ENCODE measurements at regions of chr20 and their contacts with region 1.

Region 1: GRCh38 chr20:53939572-53940359 is 130.6 kb downstream of the BCAS1 start:
- DNase-seq: peak; percentile 54
- H3K4me3 Mint-ChIP-seq: no peak overlapping the region
- H3K27ac Mint-ChIP-seq: no peak overlapping the region
- H3K4me1 Mint-ChIP-seq: peaks cover 69% of the 10 kb centered on the region
- H3K27me3 Mint-ChIP-seq: no peaks in the 10 kb centered on the region

Region 2: GRCh38 chr20:52312132-52312729 is 1627.5 kb before region 1 on chr20:
- intact Hi-C with region 1: loop called (anchors 10 kb)
- DNase-seq: peak; percentile 20
- H3K4me3 Mint-ChIP-seq: no peak overlapping the region
- H3K27ac Mint-ChIP-seq: no peak overlapping the region
- H3K4me1 Mint-ChIP-seq: no peaks in the 10 kb centered on the region
- H3K27me3 Mint-ChIP-seq: no peaks in the 10 kb centered on the region

Region 3: GRCh38 chr20:53157443-53158408 is 782.0 kb before region 1 on chr20:
- intact Hi-C with region 1: loop called (anchors 5 kb)
- DNase-seq: no peak
- H3K4me3 Mint-ChIP-seq: peak overlapping the region; percentile 12
- H3K27ac Mint-ChIP-seq: peak overlapping the region; percentile 50
- H3K4me1 Mint-ChIP-seq: peaks cover 65% of the 10 kb centered on the region
- H3K27me3 Mint-ChIP-seq: no peaks in the 10 kb centered on the region

Region 4: DNA sequence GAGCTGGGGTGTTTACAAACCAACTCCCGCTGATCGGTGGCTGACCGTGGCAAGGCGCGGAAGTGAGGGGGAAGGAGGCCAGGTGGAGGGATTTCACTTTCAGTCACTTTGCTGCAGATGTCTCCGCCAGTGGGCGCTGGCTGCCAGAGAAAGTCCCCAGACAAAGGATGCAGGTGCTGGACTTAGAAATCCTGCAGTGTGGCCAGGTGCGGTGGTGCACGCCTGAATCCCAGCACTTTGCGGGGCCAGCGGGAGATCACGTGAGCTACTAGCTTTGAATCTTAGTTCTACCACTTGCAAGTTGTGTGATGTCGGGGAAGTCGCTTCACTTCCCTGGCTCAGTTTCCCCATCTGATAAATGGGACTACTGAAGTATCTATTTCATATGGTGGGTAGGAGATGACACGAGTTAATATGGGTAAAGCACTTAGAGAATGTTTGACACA is 526.6 kb before region 1 on chr20:
- intact Hi-C with region 1: loop called (anchors 5 kb)
- DNase-seq: peak; percentile 24
- H3K4me3 Mint-ChIP-seq: no peak overlapping the region
- H3K27ac Mint-ChIP-seq: no peak overlapping the region
- H3K4me1 Mint-ChIP-seq: peaks cover 7% of the 10 kb centered on the region
- H3K27me3 Mint-ChIP-seq: no peaks in the 10 kb centered on the region

Region 5: GRCh38 chr20:54062812-54063280 is 123.1 kb after region 1 on chr20:
- intact Hi-C with region 1: loop called (anchors 2 kb)
- DNase-seq: no peak
- H3K4me3 Mint-ChIP-seq: no peak overlapping the region
- H3K27ac Mint-ChIP-seq: no peak overlapping the region
- H3K4me1 Mint-ChIP-seq: peaks cover 9% of the 10 kb centered on the region
- H3K27me3 Mint-ChIP-seq: peaks cover 2% of the 10 kb centered on the region